Tibial artery (tissue), 4 donors: ENCODE measurements at regions of chr17 and their contacts with region 1.

Region 1: DNA sequence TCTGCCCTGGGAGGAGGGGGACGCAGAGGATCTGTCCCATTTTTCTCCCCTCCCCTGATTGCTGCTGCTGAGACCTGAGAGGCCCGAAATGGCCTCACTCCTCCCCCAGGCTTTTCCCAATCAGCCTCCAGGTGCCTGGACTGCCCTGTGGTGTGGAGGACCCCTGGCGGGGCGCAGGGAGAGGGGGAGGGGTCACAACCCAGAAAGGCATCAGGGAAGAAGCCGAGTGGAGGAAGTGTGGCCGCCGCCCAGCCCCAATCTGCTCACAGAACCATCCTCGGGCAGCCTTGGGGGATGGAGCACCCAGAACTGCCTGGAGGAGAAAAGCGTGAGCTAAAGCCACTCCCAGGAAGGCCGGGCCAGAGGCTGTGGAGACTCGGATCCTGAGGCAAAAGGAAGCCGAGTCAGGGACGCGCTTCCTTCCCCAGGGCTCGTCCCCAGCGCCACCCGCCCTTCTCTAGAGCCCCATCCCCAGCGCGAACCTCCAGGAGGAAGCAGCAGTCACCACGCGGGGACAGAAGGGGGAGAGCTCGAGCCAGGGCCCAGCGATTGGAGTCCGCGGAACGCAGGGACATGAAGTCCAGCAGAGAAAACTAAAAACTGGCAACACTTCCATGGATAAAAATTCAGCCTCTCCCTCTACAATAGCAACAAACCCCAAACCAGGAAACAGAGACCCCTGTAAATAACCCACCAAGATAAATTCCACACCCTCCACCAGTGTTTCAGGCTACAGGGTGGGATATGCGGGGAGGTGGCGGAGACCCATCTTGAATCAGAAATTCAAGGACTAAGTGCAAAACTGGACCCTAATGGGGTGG is 116.3 kb upstream of the METRNL start:
- DNase-seq: peak; percentile 86 to 91
- H3K4me3 ChIP-seq: peak overlapping the region; percentile 1 to 21
- H3K27ac ChIP-seq: peak overlapping the region in 1 of 2 donors; percentile 63
- H3K4me1 ChIP-seq: peaks cover 0 to 11% (median 9%) of the 10 kb centered on the region in 4 donors
- H3K27me3 ChIP-seq: no peaks in the 10 kb centered on the region
- CTCF ChIP-seq: peak; percentile 84 to 91

Region 2: DNA sequence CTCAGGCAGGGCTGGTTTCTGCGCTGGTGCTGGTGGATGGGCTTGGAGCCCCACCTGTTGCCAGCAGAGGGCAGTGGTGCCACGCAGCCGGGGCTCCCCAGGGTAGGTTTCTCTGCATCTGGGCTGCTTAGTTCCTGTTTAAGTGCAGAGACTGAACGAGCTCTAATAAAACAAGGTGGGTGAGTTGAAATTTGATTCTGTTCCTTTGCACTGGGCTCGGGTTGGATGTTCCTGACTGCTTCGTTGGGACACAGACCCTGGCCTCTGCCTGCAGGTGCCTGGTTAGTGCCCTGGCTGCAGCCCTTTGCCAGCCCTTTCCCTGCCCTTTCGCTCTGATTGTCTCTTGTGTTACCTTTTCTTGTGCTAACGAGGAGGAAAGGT is 181.2 kb before region 1 on chr17:
- intact Hi-C with region 1: loop called (anchors 5 kb)
- DNase-seq: peak; percentile 79 to 88
- H3K4me3 ChIP-seq: no peak overlapping the region
- H3K27ac ChIP-seq: no peak overlapping the region
- H3K4me1 ChIP-seq: no peaks in the 10 kb centered on the region
- H3K27me3 ChIP-seq: no peaks in the 10 kb centered on the region
- CTCF ChIP-seq: peak; percentile 96 to 98

Region 3: GRCh38 chr17:82932518-82933310 is 30.4 kb before region 1 on chr17:
- intact Hi-C with region 1: loop called (anchors 1 kb)
- DNase-seq: peak in 1 of 2 donors; percentile 57
- H3K4me3 ChIP-seq: no peak overlapping the region
- H3K27ac ChIP-seq: no peak overlapping the region
- H3K4me1 ChIP-seq: peaks cover 0 to 8% (median 3%) of the 10 kb centered on the region in 4 donors
- H3K27me3 ChIP-seq: no peaks in the 10 kb centered on the region
- CTCF ChIP-seq: no peak

Region 4: GRCh38 chr17:83041305-83041704 is 78.2 kb after region 1 on chr17:
- intact Hi-C with region 1: loop called (anchors 10 kb)
- DNase-seq: no peak
- H3K4me3 ChIP-seq: no peak overlapping the region
- H3K27ac ChIP-seq: no peak overlapping the region
- H3K4me1 ChIP-seq: no peaks in the 10 kb centered on the region
- H3K27me3 ChIP-seq: no peaks in the 10 kb centered on the region
- CTCF ChIP-seq: no peak